ENCODE measurements at regions of chr11 and their contacts with region 1.

Region 1: GRCh38 chr11:103257360-103257759 is 148.1 kb downstream of the DYNC2H1 start:
- DNase-seq: no peak
- H3K4me3 ChIP-seq: no peak overlapping the region
- CTCF ChIP-seq: peak; percentile 22

Region 2: GRCh38 chr11:103594283-103594682 is 336.9 kb after region 1 on chr11:
- CTCF ChIA-PET with region 1: interaction called, 26 read pairs
- POLR2A ChIA-PET with region 1: no interaction called
- DNase-seq: no peak
- H3K4me3 ChIP-seq: no peak overlapping the region
- CTCF ChIP-seq: no peak

Measured in AG04449 (cell line).